Activated CD4-positive, alpha-beta T cell treated with anti-CD3 and anti-CD28 coated beads for 36 hours (primary cell): ENCODE measurements at regions of chr10 and their contacts with region 1.

Region 1: GRCh38 chr10:60769406-60769805 is 8.9 kb upstream of the CDK1 start:
- DNase-seq: no peak
- ATAC-seq: no peak
- H3K4me3 Mint-ChIP-seq: no peak overlapping the region
- H3K27ac Mint-ChIP-seq: no peak overlapping the region
- H3K4me1 Mint-ChIP-seq: peaks cover 13% of the 10 kb centered on the region
- H3K27me3 Mint-ChIP-seq: no peaks in the 10 kb centered on the region

Region 2: GRCh38 chr10:60444494-60445064 is 324.8 kb before region 1 on chr10:
- CTCF ChIA-PET with region 1: interaction called, 26 read pairs
- POLR2A ChIA-PET with region 1: no interaction called
- intact Hi-C with region 1: loop called (anchors 2 kb)
- DNase-seq: no peak
- ATAC-seq: no peak
- H3K4me3 Mint-ChIP-seq: no peak overlapping the region
- H3K27ac Mint-ChIP-seq: no peak overlapping the region
- H3K4me1 Mint-ChIP-seq: peaks cover 29% of the 10 kb centered on the region
- H3K27me3 Mint-ChIP-seq: no peaks in the 10 kb centered on the region

Region 3: GRCh38 chr10:60549686-60550085 is 219.7 kb before region 1 on chr10:
- CTCF ChIA-PET with region 1: interaction called, 3 read pairs
- POLR2A ChIA-PET with region 1: no interaction called
- intact Hi-C with region 1: loop called (anchors 2 to 10 kb)
- DNase-seq: no peak
- ATAC-seq: peak; percentile 81
- H3K4me3 Mint-ChIP-seq: no peak overlapping the region
- H3K27ac Mint-ChIP-seq: no peak overlapping the region
- H3K4me1 Mint-ChIP-seq: peaks cover 5% of the 10 kb centered on the region
- H3K27me3 Mint-ChIP-seq: no peaks in the 10 kb centered on the region

Region 4: DNA sequence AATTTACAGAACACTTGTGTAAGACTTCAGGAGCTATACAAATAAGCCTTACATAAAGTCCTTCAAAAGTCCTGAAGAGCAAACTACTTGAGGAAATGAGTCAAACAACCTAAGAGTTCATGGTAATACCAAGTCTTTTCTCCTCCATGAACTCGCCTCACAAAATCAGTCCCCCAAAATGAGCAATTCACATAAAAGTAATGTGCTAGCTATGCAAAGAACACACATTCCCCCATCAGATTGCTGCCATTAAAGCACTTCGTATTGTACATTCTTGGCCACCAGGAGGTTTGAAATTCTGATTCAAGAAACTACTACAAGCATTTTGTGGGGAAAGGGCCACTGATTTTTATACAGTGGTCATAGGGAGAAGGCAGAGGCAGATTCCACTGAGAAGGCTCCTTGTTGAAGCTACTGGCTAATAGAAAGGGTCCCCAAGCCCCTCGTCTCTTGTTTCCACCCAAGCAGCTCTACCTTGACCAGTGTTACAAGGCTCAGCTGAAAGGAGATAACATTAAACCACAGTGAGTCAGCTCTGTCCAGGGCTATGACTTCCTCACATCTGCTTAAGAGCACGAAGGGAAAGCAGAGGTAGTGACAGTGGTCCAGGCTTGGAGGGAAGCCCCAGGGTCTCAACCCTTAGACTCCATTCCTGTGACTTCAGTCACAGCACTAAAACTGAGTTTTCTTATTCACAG is 106.3 kb before region 1 on chr10:
- CTCF ChIA-PET with region 1: no interaction called
- POLR2A ChIA-PET with region 1: no interaction called
- intact Hi-C with region 1: loop called in 1 of 2 experiments (anchors 5 kb)
- DNase-seq: no peak
- ATAC-seq: peak; percentile 49
- H3K4me3 Mint-ChIP-seq: no peak overlapping the region
- H3K27ac Mint-ChIP-seq: peak overlapping the region; percentile 12
- H3K4me1 Mint-ChIP-seq: peaks cover 48% of the 10 kb centered on the region
- H3K27me3 Mint-ChIP-seq: no peaks in the 10 kb centered on the region

Region 5: DNA sequence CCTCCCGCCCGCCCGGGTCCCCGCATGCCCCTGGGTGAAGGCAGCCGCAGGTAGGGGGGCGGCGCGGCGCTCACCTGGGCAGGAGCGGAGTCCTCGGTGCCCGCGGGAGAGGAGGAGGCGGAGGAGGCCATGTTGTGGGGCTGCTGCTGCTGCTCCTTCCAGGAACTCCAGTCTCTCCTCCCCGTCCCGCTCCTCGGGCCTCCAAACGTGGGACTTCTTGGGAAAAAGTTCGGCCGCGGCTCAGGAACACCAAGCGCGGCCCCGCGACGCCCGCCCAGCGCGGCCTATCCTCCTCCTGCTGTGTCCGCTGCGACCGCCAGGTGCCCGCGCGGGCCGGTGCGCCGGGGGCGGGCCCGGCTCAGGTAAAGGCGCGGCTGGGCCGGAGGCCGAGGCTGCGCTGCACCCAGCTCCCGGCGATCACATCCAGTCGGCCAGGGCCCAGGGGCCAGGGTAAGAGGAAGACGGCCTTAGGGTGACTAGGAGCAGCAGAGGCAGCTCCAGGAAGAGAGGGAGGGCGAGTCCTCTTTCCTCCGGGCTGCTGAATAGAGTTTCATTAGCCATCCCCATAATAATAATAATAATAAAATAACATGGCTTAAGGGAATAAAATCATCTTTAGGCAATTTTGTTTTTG is 36.1 kb before region 1 on chr10:
- CTCF ChIA-PET with region 1: interaction called, 4 read pairs
- POLR2A ChIA-PET with region 1: no interaction called
- intact Hi-C with region 1: loop called (anchors 2 kb)
- DNase-seq: peak; percentile 69
- ATAC-seq: peak; percentile 59
- H3K4me3 Mint-ChIP-seq: peak overlapping the region; percentile 90
- H3K27ac Mint-ChIP-seq: no peak overlapping the region
- H3K4me1 Mint-ChIP-seq: peaks cover 32% of the 10 kb centered on the region
- H3K27me3 Mint-ChIP-seq: no peaks in the 10 kb centered on the region